ENCODE measurements at regions of chr4 and their contacts with region 1.

Region 1: DNA sequence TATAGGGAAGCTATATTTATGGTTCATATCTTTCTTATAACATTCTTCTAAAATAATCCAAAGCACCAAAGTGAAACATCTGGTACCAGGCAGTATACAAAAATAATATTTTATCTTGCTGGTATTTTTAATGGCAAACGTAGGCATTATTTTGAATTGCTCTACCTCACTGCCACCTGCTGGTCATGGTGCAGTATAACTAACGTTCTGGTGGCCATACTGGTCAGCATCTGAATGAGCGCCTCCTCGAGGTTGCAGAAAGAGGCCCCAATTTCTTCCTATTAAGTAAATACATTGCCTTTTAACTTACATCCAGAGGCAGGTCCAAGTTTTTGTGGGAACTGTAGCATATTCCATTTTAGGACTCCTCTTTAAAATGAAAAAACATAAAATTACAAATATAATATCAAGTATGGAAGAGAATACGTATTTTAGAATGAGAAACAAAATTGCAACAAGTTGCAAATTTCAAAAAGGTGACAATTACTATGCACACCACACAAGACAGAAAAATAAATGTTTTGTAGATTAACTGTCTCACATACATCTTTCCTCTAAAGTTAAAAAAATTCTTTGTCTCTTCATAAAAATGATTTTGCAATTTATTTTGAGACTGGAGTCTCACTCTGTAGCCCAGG is 22.9 kb upstream of the CWH43 start:
- DNase-seq: no peak
- H3K4me3 ChIP-seq: no peak overlapping the region
- H3K27ac ChIP-seq: no peak overlapping the region
- H3K4me1 ChIP-seq: no peaks in the 10 kb centered on the region
- H3K27me3 ChIP-seq: no peaks in the 10 kb centered on the region
- CTCF ChIP-seq: peak; percentile 69 to 95 (median 70)
- POLR2A ChIP-seq: no peak

Region 2: DNA sequence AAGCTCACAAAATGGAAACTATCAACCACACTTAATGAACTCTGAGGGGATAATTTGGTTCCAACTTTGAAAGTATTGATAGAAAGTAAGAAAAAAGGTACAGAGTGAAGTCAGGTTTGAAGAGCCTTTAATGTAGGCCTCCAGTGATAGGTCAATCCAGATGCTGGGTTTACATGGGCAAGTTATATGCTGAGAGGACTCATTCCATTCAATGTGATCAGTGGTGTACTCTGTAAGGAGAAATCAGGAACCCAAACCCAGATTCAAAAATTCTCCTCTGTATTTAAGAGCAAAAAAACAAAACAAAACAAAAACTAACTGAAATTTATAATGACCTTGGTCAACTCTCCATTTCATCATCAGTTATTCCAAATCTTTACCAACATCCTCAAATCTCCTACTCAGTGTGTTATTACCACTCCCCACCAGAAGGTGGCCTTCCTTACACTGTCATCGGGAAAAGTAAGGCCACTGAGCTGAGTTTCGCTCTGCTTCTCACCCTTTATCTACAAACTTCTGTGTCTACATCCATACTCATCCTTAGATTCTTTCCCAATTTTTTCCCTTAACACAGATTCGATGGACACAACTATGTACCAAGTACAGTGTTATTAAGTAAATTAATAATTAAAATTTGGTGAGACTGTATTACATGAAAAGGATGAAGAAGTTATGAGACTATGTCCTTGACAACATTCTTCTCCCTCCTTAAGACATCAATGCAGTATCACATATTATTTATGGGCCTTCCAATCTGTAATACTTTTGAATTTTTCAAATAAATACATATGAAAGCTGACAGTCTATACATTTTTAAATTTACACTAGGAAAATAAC is 384.8 kb before region 1 on chr4:
- intact Hi-C with region 1: loop called (anchors 5 kb)
- DNase-seq: no peak
- H3K4me3 ChIP-seq: no peak overlapping the region
- H3K27ac ChIP-seq: no peak overlapping the region
- H3K4me1 ChIP-seq: no peaks in the 10 kb centered on the region
- H3K27me3 ChIP-seq: no peaks in the 10 kb centered on the region
- CTCF ChIP-seq: peak; percentile 76 to 91 (median 83)
- POLR2A ChIP-seq: no peak